Colonic mucosa (tissue), 4 donors: ENCODE measurements at regions of chr12 and their contacts with region 1.

Region 1: DNA sequence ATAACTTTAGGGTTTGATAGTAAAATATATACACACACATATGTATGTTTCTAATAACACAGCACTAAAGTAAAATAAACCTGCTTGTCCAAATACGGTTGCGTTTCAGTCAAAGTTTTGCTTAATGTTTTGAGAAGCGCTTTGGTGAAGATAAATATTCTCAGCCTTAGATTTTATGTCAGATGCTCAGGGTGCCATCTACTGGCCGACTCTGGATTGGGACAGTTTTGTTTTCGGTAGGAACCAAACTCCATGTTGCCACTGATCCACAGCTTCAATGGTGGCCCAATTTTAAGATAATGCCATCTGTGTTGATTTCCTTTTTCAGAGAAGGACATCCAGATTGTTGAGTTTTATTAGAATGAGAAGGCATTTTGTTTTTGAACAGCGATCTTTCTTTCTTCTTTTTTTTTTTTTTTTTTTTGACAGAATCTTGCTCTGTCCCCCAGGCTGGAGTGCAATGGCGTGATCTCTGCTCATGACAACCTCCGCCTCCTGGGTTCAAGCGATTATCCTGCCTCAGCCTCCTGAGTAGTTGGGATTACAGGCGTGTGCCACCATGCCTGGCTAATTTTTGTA is 43.1 kb downstream of the LLPH start:
- DNase-seq: peak; percentile 66
- H3K4me3 ChIP-seq: no peak overlapping the region
- H3K27ac ChIP-seq: no peak overlapping the region
- H3K4me1 ChIP-seq: no peaks in the 10 kb centered on the region
- H3K27me3 ChIP-seq: no peaks in the 10 kb centered on the region
- CTCF ChIP-seq: peak; percentile 71

Region 2: DNA sequence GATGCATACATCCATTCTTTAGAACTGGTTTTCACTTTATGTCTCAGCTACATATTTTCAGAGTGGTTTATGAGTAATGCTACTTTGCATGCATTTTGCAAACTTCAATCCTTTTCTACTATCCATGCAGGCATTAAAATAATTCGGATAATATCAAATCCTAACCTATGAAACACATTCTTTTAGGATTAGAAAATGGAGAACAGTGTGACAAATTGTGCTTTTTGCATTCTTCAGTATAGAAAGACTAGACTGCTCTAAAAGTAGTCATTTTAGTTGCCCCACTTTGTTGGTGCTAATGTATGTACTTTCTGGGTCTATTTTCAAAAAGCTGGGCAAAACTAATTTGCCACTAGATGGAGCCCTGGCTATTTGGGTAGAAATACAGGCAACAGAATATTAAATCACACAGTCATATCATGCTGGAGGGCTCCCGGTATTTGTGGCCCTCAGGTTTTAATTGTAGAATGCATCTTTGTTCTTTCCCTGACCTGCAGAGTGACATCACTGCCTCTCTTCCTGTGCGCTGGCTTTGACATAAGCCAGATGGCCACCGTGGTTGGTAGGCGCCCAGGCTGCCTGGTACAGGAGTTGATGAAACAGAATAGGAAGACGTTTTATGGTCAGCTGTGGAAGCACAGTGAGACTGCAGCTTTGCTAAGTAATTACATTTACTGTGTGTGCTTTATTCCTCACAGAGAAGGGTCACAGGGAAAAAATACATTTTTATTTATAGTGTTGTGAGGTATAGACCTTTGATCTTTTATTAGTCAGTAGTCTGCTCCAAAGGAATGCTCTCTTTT is 780.9 kb before region 1 on chr12:
- intact Hi-C with region 1: loop called (anchors 5 kb)
- DNase-seq: peak; percentile 22
- H3K4me3 ChIP-seq: no peak overlapping the region
- H3K27ac ChIP-seq: no peak overlapping the region
- H3K4me1 ChIP-seq: no peaks in the 10 kb centered on the region
- H3K27me3 ChIP-seq: no peaks in the 10 kb centered on the region
- CTCF ChIP-seq: peak; percentile 37

Region 3: GRCh38 chr12:66187036-66187647 is 99.7 kb after region 1 on chr12:
- intact Hi-C with region 1: no loop called
- DNase-seq: no peak
- H3K4me3 ChIP-seq: no peak overlapping the region
- H3K27ac ChIP-seq: no peak overlapping the region
- H3K4me1 ChIP-seq: peaks cover 3% of the 10 kb centered on the region
- H3K27me3 ChIP-seq: no peaks in the 10 kb centered on the region
- CTCF ChIP-seq: no peak